Colonic mucosa (tissue), 4 donors: ENCODE measurements at regions of chrX and their contacts with region 1.

Region 1: GRCh38 chrX:129925305-129926092 is 19.5 kb downstream of the UTP14A start:
- DNase-seq: peak; percentile 78
- H3K4me3 ChIP-seq: no peak overlapping the region
- H3K27ac ChIP-seq: no peak overlapping the region
- H3K4me1 ChIP-seq: no peaks in the 10 kb centered on the region
- H3K27me3 ChIP-seq: no peaks in the 10 kb centered on the region
- CTCF ChIP-seq: peak; percentile 44

Region 2: GRCh38 chrX:130028196-130028595 is 102.7 kb after region 1 on chrX:
- intact Hi-C with region 1: loop called (anchors 5 kb)
- DNase-seq: peak; percentile 52
- H3K4me3 ChIP-seq: no peak overlapping the region
- H3K27ac ChIP-seq: no peak overlapping the region
- H3K4me1 ChIP-seq: no peaks in the 10 kb centered on the region
- H3K27me3 ChIP-seq: no peaks in the 10 kb centered on the region
- CTCF ChIP-seq: peak; percentile 87

Region 3: GRCh38 chrX:130060122-130061069 is 134.9 kb after region 1 on chrX:
- intact Hi-C with region 1: loop called (anchors 10 kb)
- DNase-seq: peak; percentile 86
- H3K4me3 ChIP-seq: peak overlapping the region; percentile 27
- H3K27ac ChIP-seq: no peak overlapping the region
- H3K4me1 ChIP-seq: no peaks in the 10 kb centered on the region
- H3K27me3 ChIP-seq: no peaks in the 10 kb centered on the region
- CTCF ChIP-seq: peak; percentile 79

Region 4: GRCh38 chrX:130190801-130191200 is 265.3 kb after region 1 on chrX:
- intact Hi-C with region 1: loop called (anchors 5 kb)
- DNase-seq: no peak
- H3K4me3 ChIP-seq: no peak overlapping the region
- H3K27ac ChIP-seq: no peak overlapping the region
- H3K4me1 ChIP-seq: no peaks in the 10 kb centered on the region
- H3K27me3 ChIP-seq: no peaks in the 10 kb centered on the region
- CTCF ChIP-seq: no peak